Psoas muscle (tissue), 8 donors: ENCODE measurements at regions of chr4 and their contacts with region 1.

Region 1: GRCh38 chr4:17576932-17577665 is at the start of gene LAP3:
- DNase-seq: peak; percentile 97 to 99
- ATAC-seq: peak; percentile 98 to 99 (median 98)
- H3K4me3 ChIP-seq: peak within 1 kb of the TSS; percentile 78
- H3K27ac ChIP-seq: peak within 1 kb of the TSS; percentile 90
- H3K4me1 ChIP-seq: peaks cover 11% of the 10 kb centered on the region
- H3K27me3 ChIP-seq: no peaks in the 10 kb centered on the region
- CTCF ChIP-seq: no peak
- total RNA-seq, gene LAP3: 52.0 to 81.3 (median 66.2) TPM

Region 2: GRCh38 chr4:17614416-17615299 is 37.6 kb after region 1 on chr4 and contains the start of gene MED28:
- intact Hi-C with region 1: loop called in 1 of 2 experiments (anchors 5 kb)
- DNase-seq: peak; percentile 96 to 98
- ATAC-seq: peak; percentile 88 to 96 (median 92)
- H3K4me3 ChIP-seq: peak within 1 kb of the TSS; percentile 81
- H3K27ac ChIP-seq: peak within 1 kb of the TSS; percentile 90
- H3K4me1 ChIP-seq: peaks cover 46% of the 10 kb centered on the region
- H3K27me3 ChIP-seq: no peaks in the 10 kb centered on the region
- CTCF ChIP-seq: no peak
- total RNA-seq, gene MED28: 27.2 to 58.3 (median 44.0) TPM

Region 3: DNA sequence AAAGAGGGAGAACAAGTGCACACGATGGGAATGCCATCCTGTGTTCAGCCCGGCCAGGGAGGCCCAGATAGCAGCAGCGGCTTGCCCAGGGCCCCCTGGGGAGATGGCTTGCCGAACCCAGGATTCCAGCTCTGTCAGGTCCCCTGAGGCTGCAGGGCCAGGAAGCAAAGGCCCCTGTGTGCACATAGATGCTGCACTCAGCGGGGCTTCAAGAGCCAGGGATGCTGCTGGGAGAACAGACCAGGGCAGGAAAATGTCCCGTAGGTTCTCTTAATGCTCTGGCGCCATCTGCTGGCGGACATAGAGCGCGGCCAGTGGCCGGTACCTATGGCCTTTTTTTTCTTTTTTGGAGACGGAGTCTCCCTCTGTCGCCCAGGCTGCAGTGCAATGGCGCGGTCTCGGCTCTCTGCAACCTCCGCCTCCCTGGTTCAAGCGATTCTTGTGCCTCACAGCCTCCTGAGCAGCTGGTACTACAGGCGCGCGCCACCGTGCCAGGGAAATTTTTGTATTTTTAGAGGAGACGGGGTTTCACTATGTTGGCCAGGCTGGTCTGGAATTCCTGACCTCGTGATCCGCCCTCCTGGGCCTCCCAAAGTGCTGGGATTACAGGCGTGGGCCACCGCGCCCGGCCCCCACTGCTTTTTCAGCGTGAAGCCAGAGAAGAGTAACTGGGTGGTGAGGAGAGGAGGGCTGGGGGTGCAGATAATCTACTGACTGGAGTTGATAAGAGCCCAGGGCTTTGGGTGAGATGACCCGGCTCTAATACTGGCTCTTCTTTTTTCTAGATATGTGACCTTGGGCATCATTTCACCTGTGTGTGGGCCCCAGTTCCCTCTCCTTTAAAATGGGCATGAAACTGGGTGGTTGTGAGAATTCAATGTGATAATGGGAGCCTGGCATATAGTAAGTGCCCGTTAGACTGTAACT is 59.9 kb after region 1 on chr4:
- intact Hi-C with region 1: loop called in 1 of 2 experiments (anchors 10 kb)
- DNase-seq: peak; percentile 78 to 89
- ATAC-seq: peak; percentile 81 to 88 (median 84)
- H3K4me3 ChIP-seq: no peak overlapping the region
- H3K27ac ChIP-seq: no peak overlapping the region
- H3K4me1 ChIP-seq: no peaks in the 10 kb centered on the region
- H3K27me3 ChIP-seq: no peaks in the 10 kb centered on the region
- CTCF ChIP-seq: peak; percentile 92

Region 4: GRCh38 chr4:18021722-18022571 is 444.8 kb after region 1 on chr4 and contains the start of gene LCORL:
- intact Hi-C with region 1: loop called in 1 of 2 experiments (anchors 5 kb)
- DNase-seq: peak; percentile 92 to 96
- ATAC-seq: peak; percentile 93 to 95 (median 93)
- H3K4me3 ChIP-seq: peak within 1 kb of the TSS; percentile 92
- H3K27ac ChIP-seq: peak within 1 kb of the TSS; percentile 94
- H3K4me1 ChIP-seq: peaks cover 15% of the 10 kb centered on the region
- H3K27me3 ChIP-seq: no peaks in the 10 kb centered on the region
- CTCF ChIP-seq: peak; percentile 22
- total RNA-seq, gene LCORL: 5.3 to 7.5 (median 7.3) TPM